ENCODE measurements at regions of chr10 and their contacts with region 1.

Region 1: DNA sequence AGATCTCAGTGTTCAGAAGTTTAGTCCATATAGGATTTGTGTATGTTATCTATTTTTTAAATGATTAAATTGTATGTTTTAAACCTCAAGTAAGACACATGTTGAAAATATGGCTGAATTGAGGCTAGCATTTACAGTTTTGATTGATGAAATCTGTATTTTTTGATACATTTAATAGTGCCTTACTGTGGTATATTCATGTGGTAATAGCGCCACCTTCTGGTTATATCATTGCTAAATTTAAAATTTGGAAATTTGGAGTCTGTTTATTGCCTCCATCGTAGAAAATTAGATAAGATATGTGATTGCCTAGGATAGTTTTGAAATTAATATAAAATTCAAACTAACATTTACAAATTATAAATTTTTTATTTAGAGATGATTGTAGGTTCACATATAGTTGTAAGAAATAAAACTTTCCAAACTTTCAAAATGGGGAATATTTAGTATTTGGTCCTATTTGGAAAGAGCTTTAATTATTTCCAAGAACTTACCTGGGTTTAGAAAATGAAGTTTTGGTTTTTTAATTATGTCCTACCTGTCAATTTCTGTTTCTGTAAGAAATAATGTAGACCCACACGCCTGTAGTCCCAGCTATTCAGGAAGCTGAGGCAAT is 19.1 kb upstream of the ARMS2 start:
- DNase-seq: peak; percentile 9 to 23 (median 20)
- ATAC-seq: no peak
- H3K4me3 ChIP-seq: no peak overlapping the region
- H3K27ac ChIP-seq: no peak overlapping the region
- H3K4me1 ChIP-seq: no peaks in the 10 kb centered on the region
- H3K27me3 ChIP-seq: no peaks in the 10 kb centered on the region; a peak in 1 of 5 replicates
- CTCF ChIP-seq: peak in 2 of 3 experiments; percentile 19 to 62; a peak in 4 of 6 replicates
- EP300 ChIP-seq: no peak
- POLR2A ChIP-seq: no peak
- RAD21 ChIP-seq: peak; percentile 64 to 77

Region 2: GRCh38 chr10:122142641-122143237 is 292.6 kb before region 1 on chr10:
- CTCF ChIA-PET with region 1: no interaction called
- POLR2A ChIA-PET with region 1: no interaction called
- in situ Hi-C with region 1: loop called (anchors 25 kb)
- intact Hi-C with region 1: loop called (anchors 5 kb)
- DNase-seq: peak; percentile 18 to 73 (median 60)
- ATAC-seq: peak; percentile 74
- H3K4me3 ChIP-seq: no peak overlapping the region
- H3K27ac ChIP-seq: no peak overlapping the region
- H3K4me1 ChIP-seq: no peaks in the 10 kb centered on the region
- H3K27me3 ChIP-seq: peaks cover 2 to 28% of the 10 kb centered on the region in 2 experiments; a peak in 4 of 5 replicates
- CTCF ChIP-seq: peak; percentile 55 to 75 (median 63)
- EP300 ChIP-seq: no peak
- POLR2A ChIP-seq: no peak
- RAD21 ChIP-seq: peak in 1 of 2 experiments; percentile 62; a peak in 2 of 4 replicates

Region 3: DNA sequence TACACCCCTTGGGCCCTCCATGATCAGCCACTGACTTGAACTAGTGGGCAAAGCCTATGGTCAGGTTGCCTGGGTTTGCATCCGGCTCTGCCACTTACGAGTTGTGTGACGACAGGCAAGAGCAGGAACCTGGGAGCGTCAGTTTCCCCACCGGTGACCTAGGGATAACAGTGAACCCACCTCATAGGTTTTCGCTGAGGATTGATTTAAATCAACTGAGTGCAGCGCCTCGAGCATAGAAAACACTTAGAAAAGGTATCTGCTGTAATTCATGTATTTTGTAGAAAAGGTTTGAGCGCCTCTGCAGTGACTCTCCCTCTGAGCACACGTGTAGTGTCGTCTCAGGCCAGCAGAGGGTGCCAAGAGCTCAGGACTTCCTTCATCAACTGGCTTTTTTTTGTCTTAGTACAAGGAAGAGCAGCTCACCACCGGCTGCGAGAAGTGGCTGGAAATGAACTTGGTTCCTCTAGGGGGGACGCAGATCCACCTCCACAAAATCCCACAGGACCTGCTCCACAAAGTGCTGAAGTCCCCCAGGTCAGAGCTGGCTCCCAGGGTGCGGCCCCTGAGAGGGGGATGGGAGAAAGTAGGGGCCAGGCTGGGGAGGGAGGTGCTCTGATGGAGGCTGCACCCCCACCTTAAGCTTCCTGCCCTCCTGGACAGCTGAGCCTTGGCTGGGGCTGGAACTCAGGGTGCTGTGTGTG is 136.6 kb before region 1 on chr10:
- CTCF ChIA-PET with region 1: interaction called, 21 read pairs
- POLR2A ChIA-PET with region 1: interaction called, 4 read pairs
- in situ Hi-C with region 1: no loop called
- intact Hi-C with region 1: loop called (anchors 1 kb)
- DNase-seq: peak; percentile 51 to 56 (median 54)
- ATAC-seq: peak; percentile 92
- H3K4me3 ChIP-seq: no peak overlapping the region
- H3K27ac ChIP-seq: no peak overlapping the region
- H3K4me1 ChIP-seq: no peaks in the 10 kb centered on the region
- H3K27me3 ChIP-seq: no peaks in the 10 kb centered on the region; a peak in 1 of 5 replicates
- CTCF ChIP-seq: peak; percentile 67 to 77 (median 77)
- EP300 ChIP-seq: no peak
- POLR2A ChIP-seq: no peak
- RAD21 ChIP-seq: peak; percentile 59 to 82

Region 4: GRCh38 chr10:122307669-122308486 is 127.4 kb before region 1 on chr10:
- CTCF ChIA-PET with region 1: no interaction called
- POLR2A ChIA-PET with region 1: no interaction called
- in situ Hi-C with region 1: loop called (anchors 5 kb)
- intact Hi-C with region 1: no loop called
- DNase-seq: peak in 2 of 4 experiments; percentile 9 to 13
- ATAC-seq: no peak
- H3K4me3 ChIP-seq: no peak overlapping the region
- H3K27ac ChIP-seq: peak overlapping the region; percentile 40; the same call in 1 of the 3 replicates
- H3K4me1 ChIP-seq: peaks cover 0 to 3% of the 10 kb centered on the region in 2 experiments; a peak in 2 of 5 replicates
- H3K27me3 ChIP-seq: no peaks in the 10 kb centered on the region
- CTCF ChIP-seq: no peak
- EP300 ChIP-seq: no peak
- POLR2A ChIP-seq: no peak
- RAD21 ChIP-seq: no peak

Region 5: GRCh38 chr10:122342293-122343134 is 92.8 kb before region 1 on chr10:
- CTCF ChIA-PET with region 1: interaction called, 3 read pairs
- POLR2A ChIA-PET with region 1: no interaction called
- in situ Hi-C with region 1: no loop called
- intact Hi-C with region 1: loop called (anchors 2 kb)
- DNase-seq: peak; percentile 31 to 47 (median 45)
- ATAC-seq: peak; percentile 58; the same call in 2 of the 3 replicates
- H3K4me3 ChIP-seq: no peak overlapping the region
- H3K27ac ChIP-seq: no peak overlapping the region
- H3K4me1 ChIP-seq: no peaks in the 10 kb centered on the region
- H3K27me3 ChIP-seq: peaks cover 0 to 9% of the 10 kb centered on the region in 2 experiments; a peak in 4 of 5 replicates
- CTCF ChIP-seq: peak; percentile 55 to 63 (median 60)
- EP300 ChIP-seq: no peak
- POLR2A ChIP-seq: no peak
- RAD21 ChIP-seq: peak in 1 of 2 experiments; percentile 59; a peak in 2 of 4 replicates

Region 6: GRCh38 chr10:122565728-122566206 is 130.4 kb after region 1 on chr10:
- CTCF ChIA-PET with region 1: interaction called, 7 read pairs
- POLR2A ChIA-PET with region 1: no interaction called
- in situ Hi-C with region 1: no loop called
- intact Hi-C with region 1: loop called (anchors 5 kb)
- DNase-seq: peak; percentile 16 to 63 (median 23)
- ATAC-seq: peak; percentile 68; the same call in 2 of the 3 replicates
- H3K4me3 ChIP-seq: no peak overlapping the region
- H3K27ac ChIP-seq: no peak overlapping the region
- H3K4me1 ChIP-seq: no peaks in the 10 kb centered on the region
- H3K27me3 ChIP-seq: no peaks in the 10 kb centered on the region
- CTCF ChIP-seq: peak; percentile 54 to 71 (median 65); a peak in 5 of 6 replicates
- EP300 ChIP-seq: no peak
- POLR2A ChIP-seq: no peak
- RAD21 ChIP-seq: peak; percentile 31 to 71; a peak in 3 of 4 replicates

Measured in K562 (cell line).